ENCODE measurements at regions of chr4 and their contacts with region 1.

Region 1: GRCh38 chr4:95165926-95166524 is 382.7 kb downstream of the UNC5C start:
- DNase-seq: peak in 3 of 9 experiments; percentile 15 to 71 (median 57)
- ATAC-seq: peak; percentile 56
- H3K4me3 ChIP-seq: no peak overlapping the region
- H3K4me3 Mint-ChIP-seq: no peak overlapping the region
- H3K27ac ChIP-seq: no peak overlapping the region
- H3K27ac Mint-ChIP-seq: no peak overlapping the region
- H3K4me1 ChIP-seq: peaks cover 5% of the 10 kb centered on the region
- H3K4me1 Mint-ChIP-seq: peaks cover 5% of the 10 kb centered on the region
- H3K27me3 ChIP-seq: no peaks in the 10 kb centered on the region
- H3K27me3 Mint-ChIP-seq: peaks cover 3% of the 10 kb centered on the region
- CTCF ChIP-seq: peak; percentile 72

Region 2: DNA sequence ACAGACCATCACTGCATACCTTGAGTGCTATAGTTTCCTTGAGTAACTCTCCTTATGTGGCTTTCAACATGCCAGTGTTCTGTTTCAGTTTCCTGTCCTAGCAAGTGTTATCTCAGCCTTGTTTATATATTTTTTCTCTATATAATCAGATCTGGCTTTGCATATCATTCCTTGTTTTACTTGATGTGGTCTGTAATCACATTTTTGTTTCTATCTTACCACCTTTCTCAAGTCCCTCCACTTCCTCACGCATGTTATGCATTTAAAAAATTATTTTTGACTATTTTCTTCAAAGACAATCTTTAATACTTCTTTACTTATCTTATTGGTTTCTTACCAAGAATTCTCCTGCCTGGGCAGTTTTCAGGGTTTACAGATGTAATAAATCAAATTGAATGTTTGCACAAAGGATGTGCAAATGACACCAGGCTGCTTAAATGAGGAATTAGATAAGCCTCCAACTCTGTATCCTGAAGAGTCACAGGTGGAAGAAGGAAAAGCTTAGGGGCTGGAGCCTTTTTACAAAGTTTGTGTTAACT is 57.1 kb before region 1 on chr4:
- CTCF ChIA-PET with region 1: no interaction called
- POLR2A ChIA-PET with region 1: no interaction called
- intact Hi-C with region 1: no loop called
- DNase-seq: no peak
- ATAC-seq: no peak
- H3K4me3 ChIP-seq: no peak overlapping the region
- H3K4me3 Mint-ChIP-seq: no peak overlapping the region
- H3K27ac ChIP-seq: no peak overlapping the region
- H3K27ac Mint-ChIP-seq: no peak overlapping the region
- H3K4me1 ChIP-seq: no peaks in the 10 kb centered on the region
- H3K4me1 Mint-ChIP-seq: no peaks in the 10 kb centered on the region
- H3K27me3 ChIP-seq: no peaks in the 10 kb centered on the region
- H3K27me3 Mint-ChIP-seq: no peaks in the 10 kb centered on the region
- CTCF ChIP-seq: no peak

Region 3: DNA sequence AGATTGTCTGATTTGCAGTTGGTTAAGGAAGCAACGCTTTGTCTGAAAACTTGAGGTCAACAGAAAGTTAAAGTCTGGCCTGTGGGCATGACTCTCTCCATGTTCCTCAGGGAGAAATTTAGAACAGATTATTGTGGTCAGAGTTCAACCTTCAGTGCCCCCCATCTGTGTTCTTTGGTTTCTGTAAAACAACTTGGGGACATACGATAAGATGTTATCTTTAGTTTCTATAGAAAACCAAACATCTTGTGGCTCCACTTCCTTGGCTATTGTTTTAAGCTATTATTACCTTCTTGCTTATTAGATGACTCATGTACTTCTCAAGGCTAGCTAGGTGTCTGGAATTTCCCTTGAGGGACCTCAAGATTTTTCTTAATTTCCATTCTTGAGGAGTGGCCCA is 1181.6 kb after region 1 on chr4:
- CTCF ChIA-PET with region 1: no interaction called
- POLR2A ChIA-PET with region 1: no interaction called
- intact Hi-C with region 1: loop called in 1 of 2 experiments (anchors 10 kb)
- DNase-seq: no peak
- ATAC-seq: no peak
- H3K4me3 ChIP-seq: no peak overlapping the region
- H3K4me3 Mint-ChIP-seq: no peak overlapping the region
- H3K27ac ChIP-seq: no peak overlapping the region
- H3K27ac Mint-ChIP-seq: no peak overlapping the region
- H3K4me1 ChIP-seq: no peaks in the 10 kb centered on the region
- H3K4me1 Mint-ChIP-seq: no peaks in the 10 kb centered on the region
- H3K27me3 ChIP-seq: no peaks in the 10 kb centered on the region
- H3K27me3 Mint-ChIP-seq: no peaks in the 10 kb centered on the region
- CTCF ChIP-seq: no peak